ENCODE measurements at regions of chr18 and their contacts with region 1.

Region 1: DNA sequence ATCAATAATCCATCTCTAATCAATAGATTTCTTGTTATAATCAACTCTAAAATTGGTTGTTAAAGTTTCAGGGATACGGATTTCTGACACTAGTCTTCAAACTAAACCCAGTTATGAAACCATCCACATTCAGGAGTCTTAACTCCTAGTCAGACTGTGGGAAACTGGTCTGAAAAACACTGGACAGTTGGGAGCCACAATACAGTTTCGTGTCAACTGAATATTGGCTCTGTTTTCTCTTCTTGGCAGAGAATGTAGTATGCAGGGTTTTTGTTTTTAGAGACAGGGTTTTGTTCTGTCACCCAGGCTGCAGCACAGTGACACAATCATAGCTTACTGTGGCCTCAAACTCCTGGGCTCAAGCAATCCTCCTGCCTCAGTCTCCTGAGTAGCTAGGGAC is 123.1 kb downstream of the RTTN start:
- DNase-seq: no peak
- H3K4me3 Mint-ChIP-seq: no peak overlapping the region
- H3K27ac Mint-ChIP-seq: no peak overlapping the region
- H3K4me1 Mint-ChIP-seq: peaks cover 2% of the 10 kb centered on the region
- H3K27me3 Mint-ChIP-seq: no peaks in the 10 kb centered on the region

Region 2: GRCh38 chr18:68735483-68736343 is 1346.7 kb before region 1 on chr18:
- CTCF ChIA-PET with region 1: no interaction called
- POLR2A ChIA-PET with region 1: no interaction called
- intact Hi-C with region 1: loop called (anchors 10 kb)
- DNase-seq: no peak
- H3K4me3 Mint-ChIP-seq: no peak overlapping the region
- H3K27ac Mint-ChIP-seq: no peak overlapping the region
- H3K4me1 Mint-ChIP-seq: no peaks in the 10 kb centered on the region
- H3K27me3 Mint-ChIP-seq: no peaks in the 10 kb centered on the region

Region 3: DNA sequence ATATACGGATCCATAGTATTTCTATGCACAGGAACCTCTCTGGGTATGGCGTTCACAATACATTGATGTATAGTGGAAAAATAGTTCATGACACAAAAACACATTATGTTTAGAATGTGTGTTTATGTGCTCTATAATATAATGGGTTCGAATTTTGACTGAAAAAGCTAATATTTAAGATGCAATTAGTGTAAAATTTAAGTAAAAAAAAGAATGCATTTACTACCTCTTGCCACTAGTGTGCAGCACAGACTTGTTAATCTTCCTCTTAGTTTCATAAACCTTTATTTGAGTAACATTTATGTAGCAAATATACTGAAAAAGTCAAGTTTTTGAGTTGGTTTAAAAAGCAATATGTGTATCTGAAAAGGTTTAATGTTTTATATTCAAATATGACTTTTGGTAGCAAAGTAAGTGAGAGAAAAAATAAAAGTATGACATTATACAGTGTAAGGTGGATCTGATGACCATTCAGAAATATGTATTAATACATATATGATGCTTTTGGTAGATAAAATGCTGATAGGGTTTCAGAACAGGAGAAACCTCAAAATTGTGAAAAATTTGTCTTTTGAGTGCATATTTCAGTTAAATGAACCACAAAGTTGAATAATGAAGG is 1235.1 kb before region 1 on chr18:
- CTCF ChIA-PET with region 1: interaction called, 5 read pairs
- POLR2A ChIA-PET with region 1: no interaction called
- intact Hi-C with region 1: loop called (anchors 5 kb)
- DNase-seq: no peak
- H3K4me3 Mint-ChIP-seq: no peak overlapping the region
- H3K27ac Mint-ChIP-seq: no peak overlapping the region
- H3K4me1 Mint-ChIP-seq: no peaks in the 10 kb centered on the region
- H3K27me3 Mint-ChIP-seq: no peaks in the 10 kb centered on the region

Region 4: GRCh38 chr18:69469444-69469919 is 612.9 kb before region 1 on chr18:
- CTCF ChIA-PET with region 1: interaction called, 4 read pairs
- POLR2A ChIA-PET with region 1: no interaction called
- intact Hi-C with region 1: loop called (anchors 1 kb)
- DNase-seq: peak; percentile 68
- H3K4me3 Mint-ChIP-seq: no peak overlapping the region
- H3K27ac Mint-ChIP-seq: no peak overlapping the region
- H3K4me1 Mint-ChIP-seq: peaks cover 7% of the 10 kb centered on the region
- H3K27me3 Mint-ChIP-seq: no peaks in the 10 kb centered on the region

Region 5: GRCh38 chr18:69636529-69637301 is 445.7 kb before region 1 on chr18:
- CTCF ChIA-PET with region 1: interaction called, 3 read pairs
- POLR2A ChIA-PET with region 1: no interaction called
- intact Hi-C with region 1: loop called (anchors 1 kb)
- DNase-seq: peak; percentile 31
- H3K4me3 Mint-ChIP-seq: no peak overlapping the region
- H3K27ac Mint-ChIP-seq: no peak overlapping the region
- H3K4me1 Mint-ChIP-seq: no peaks in the 10 kb centered on the region
- H3K27me3 Mint-ChIP-seq: no peaks in the 10 kb centered on the region

Region 6: DNA sequence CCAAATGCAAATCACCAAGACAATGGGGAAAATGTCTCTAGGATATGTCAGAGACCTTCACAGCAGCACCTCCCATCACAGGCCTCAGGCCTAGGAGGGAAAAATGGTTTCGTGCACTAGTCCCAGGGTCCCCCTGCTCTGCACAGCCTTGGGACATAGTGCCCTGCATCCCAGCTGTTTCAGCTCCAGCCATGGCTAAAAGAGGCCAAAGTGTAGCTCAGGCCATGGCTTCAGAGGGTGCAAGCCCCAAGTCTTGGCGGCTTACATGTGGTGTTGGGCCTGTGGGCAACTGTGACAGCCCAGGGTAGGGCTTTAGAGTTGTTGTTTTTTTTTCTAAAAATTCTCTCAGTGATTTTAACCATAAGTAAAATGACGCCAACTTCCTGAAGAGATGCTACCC is 180.9 kb after region 1 on chr18:
- CTCF ChIA-PET with region 1: no interaction called
- POLR2A ChIA-PET with region 1: no interaction called
- intact Hi-C with region 1: no loop called
- DNase-seq: no peak
- H3K4me3 Mint-ChIP-seq: no peak overlapping the region
- H3K27ac Mint-ChIP-seq: no peak overlapping the region
- H3K4me1 Mint-ChIP-seq: no peaks in the 10 kb centered on the region
- H3K27me3 Mint-ChIP-seq: peaks cover 1% of the 10 kb centered on the region